Activated CD4-positive, alpha-beta T cell treated with anti-CD3 and anti-CD28 coated beads for 36 hours (primary cell): ENCODE measurements at regions of chr2 and their contacts with region 1.

Region 1: DNA sequence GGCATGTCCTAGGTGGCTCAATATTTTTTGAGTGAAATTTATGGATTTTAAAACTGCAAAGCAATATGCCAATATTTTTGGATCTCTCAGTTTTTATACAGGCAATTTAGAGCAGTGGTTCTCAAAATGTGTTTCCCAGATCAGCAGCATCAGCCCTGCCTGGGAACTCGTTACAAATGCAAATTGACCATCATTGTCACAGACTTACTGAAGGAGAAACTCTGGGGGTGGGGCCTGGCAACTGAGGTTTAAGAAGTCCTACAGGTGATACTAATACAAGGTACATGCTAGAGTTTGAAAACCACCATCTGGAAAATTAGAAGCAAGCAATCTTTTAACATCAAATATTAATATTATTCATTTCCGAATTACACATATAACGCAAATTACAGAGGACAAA is 215.6 kb upstream of the PID1 start:
- DNase-seq: no peak
- ATAC-seq: no peak
- H3K4me3 Mint-ChIP-seq: no peak overlapping the region
- H3K27ac Mint-ChIP-seq: no peak overlapping the region
- H3K4me1 Mint-ChIP-seq: no peaks in the 10 kb centered on the region
- H3K27me3 Mint-ChIP-seq: peaks cover 5% of the 10 kb centered on the region

Region 2: GRCh38 chr2:229202646-229203045 is 284.0 kb before region 1 on chr2:
- CTCF ChIA-PET with region 1: no interaction called
- POLR2A ChIA-PET with region 1: interaction called, 14 read pairs
- intact Hi-C with region 1: no loop called
- DNase-seq: no peak
- ATAC-seq: no peak
- H3K4me3 Mint-ChIP-seq: no peak overlapping the region
- H3K27ac Mint-ChIP-seq: no peak overlapping the region
- H3K4me1 Mint-ChIP-seq: no peaks in the 10 kb centered on the region
- H3K27me3 Mint-ChIP-seq: no peaks in the 10 kb centered on the region